ENCODE measurements at regions of chr9 and their contacts with region 1.

Region 1: DNA sequence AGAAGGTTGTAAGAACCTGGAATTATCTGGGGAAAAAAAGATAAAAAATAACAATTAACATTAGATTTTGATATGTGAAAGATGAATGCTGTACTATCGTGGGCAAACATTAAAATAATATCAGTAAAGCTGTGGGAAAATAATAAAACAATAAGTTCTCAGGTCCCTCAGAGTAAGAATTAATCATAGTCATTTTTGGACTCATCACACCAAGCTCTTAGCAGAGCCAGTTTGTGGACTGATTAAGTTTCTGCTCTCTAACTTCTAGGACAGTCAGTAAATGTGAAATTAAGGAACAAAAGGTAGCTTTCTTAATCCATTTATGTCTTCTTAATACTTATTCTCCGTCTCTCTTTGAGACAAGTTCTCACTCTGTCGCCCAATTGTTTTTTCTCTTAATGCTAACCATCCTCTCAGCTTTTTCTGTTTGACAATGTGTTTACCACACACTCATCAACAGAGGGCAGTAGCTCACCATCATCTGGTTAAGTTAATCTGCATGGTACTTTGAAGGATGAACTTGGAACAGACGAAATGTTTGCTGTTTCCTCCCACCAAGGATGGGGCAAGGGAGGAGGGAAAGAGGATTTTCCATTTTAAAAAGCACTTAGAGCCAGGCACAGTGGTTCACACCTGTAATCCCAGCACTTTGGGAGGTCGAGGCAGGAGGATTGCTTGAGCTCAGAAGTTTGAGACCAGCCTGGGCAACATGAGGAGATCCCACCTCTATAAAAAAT is 5.3 kb upstream of the ACO1 start:
- DNase-seq: peak; percentile 85
- ATAC-seq: peak; percentile 78
- H3K4me3 ChIP-seq: no peak overlapping the region
- H3K27ac ChIP-seq: no peak overlapping the region
- H3K4me1 ChIP-seq: peaks cover 4% of the 10 kb centered on the region
- H3K27me3 ChIP-seq: peaks cover 2% of the 10 kb centered on the region; the same call in 1 of the 2 replicates
- CTCF ChIP-seq: peak; percentile 95
- POLR2A ChIP-seq: 0 out of 2 replicates have a peak, but pooled peaks have one; percentile 34
- RAD21 ChIP-seq: peak; percentile 97

Region 2: GRCh38 chr9:32326146-32326545 is 53.0 kb before region 1 on chr9:
- CTCF ChIA-PET with region 1: no interaction called
- POLR2A ChIA-PET with region 1: no interaction called
- dilution Hi-C with region 1: no loop called
- in situ Hi-C with region 1: no loop called
- intact Hi-C with region 1: no loop called
- DNase-seq: no peak
- ATAC-seq: no peak
- H3K4me3 ChIP-seq: no peak overlapping the region
- H3K27ac ChIP-seq: no peak overlapping the region
- H3K4me1 ChIP-seq: no peaks in the 10 kb centered on the region
- H3K27me3 ChIP-seq: no peaks in the 10 kb centered on the region
- CTCF ChIP-seq: no peak
- POLR2A ChIP-seq: no peak
- RAD21 ChIP-seq: no peak

Region 3: GRCh38 chr9:32431940-32432555 is 52.9 kb after region 1 on chr9:
- CTCF ChIA-PET with region 1: interaction called, 18 read pairs
- POLR2A ChIA-PET with region 1: no interaction called
- dilution Hi-C with region 1: no loop called
- in situ Hi-C with region 1: no loop called
- intact Hi-C with region 1: loop called (anchors 1 kb)
- DNase-seq: peak; percentile 64
- ATAC-seq: peak; percentile 43
- H3K4me3 ChIP-seq: no peak overlapping the region
- H3K27ac ChIP-seq: peak overlapping the region; percentile 82
- H3K4me1 ChIP-seq: peaks cover 35% of the 10 kb centered on the region
- H3K27me3 ChIP-seq: no peaks in the 10 kb centered on the region
- CTCF ChIP-seq: peak; percentile 57
- POLR2A ChIP-seq: no peak
- RAD21 ChIP-seq: peak; percentile 55

Region 4: DNA sequence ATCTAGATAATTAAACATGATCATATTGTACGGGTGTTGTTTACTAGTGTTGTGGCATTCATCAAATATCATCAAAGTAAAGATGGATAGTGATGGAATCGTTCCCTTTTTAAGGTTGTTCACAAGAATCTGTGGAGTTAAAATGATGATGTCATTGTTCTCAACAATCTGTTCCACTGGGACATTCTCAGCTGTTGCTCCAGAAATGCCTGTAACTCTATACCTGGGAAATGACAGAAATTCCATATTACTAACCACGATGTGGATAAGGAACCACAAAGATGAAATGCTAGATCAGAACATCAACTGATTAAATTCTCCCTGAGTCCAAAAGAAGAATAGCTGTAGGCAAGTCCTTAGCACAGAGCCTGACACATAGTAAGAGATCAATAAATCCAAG is 108.8 kb after region 1 on chr9:
- CTCF ChIA-PET with region 1: interaction called, 11 read pairs
- POLR2A ChIA-PET with region 1: no interaction called
- dilution Hi-C with region 1: no loop called
- in situ Hi-C with region 1: no loop called
- intact Hi-C with region 1: no loop called
- DNase-seq: peak; percentile 86
- ATAC-seq: peak; percentile 25
- H3K4me3 ChIP-seq: no peak overlapping the region
- H3K27ac ChIP-seq: no peak overlapping the region
- H3K4me1 ChIP-seq: peaks cover 4% of the 10 kb centered on the region; the same call in 1 of the 2 replicates
- H3K27me3 ChIP-seq: no peaks in the 10 kb centered on the region
- CTCF ChIP-seq: no peak
- POLR2A ChIP-seq: no peak
- RAD21 ChIP-seq: no peak

Region 5: DNA sequence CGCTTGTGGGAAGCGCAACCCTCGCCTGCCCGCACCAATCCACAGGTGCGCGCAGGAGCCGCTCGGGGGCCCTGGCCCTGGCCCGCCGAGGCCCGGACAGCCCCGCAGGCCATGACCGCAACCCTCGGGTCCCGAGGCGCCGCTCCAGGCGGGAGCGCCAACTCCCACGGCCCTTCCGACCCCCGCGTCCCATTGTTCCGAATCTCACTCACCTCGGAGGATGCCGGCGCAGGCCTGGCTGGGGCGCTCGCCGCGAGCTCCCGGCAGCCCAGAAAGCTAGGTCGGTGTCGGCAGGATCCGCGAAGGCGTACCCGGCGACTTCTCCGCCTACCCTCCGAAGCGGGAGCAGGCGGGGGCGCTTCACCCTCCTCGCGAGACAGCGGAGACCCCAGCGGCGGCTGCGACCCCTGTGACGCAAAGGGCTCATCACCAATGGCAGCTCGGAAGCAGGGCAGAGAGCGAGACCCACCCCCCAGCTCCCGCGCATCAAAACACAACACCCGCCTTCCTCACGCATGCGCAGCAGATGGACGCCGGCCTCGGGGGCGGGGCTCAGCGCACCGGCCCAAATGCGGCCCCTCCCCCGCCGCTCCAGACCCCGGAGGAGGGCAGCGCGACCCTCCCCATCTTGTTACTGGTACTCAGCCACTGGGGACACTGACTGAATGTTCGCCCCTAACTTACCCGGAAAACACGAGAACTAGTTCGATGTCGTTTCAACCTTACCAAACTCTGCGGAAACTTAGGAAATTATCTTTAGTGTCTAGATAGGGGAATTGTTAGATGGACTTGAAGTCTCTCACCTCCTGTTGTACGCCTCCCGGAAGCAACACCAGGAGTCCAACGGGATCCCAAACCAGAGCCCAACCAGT is 171.6 kb after region 1 on chr9:
- CTCF ChIA-PET with region 1: interaction called, 9 read pairs
- POLR2A ChIA-PET with region 1: no interaction called
- dilution Hi-C with region 1: no loop called
- in situ Hi-C with region 1: no loop called
- intact Hi-C with region 1: loop called (anchors 2 kb)
- DNase-seq: peak; percentile 91
- ATAC-seq: peak; percentile 82
- H3K4me3 ChIP-seq: peak overlapping the region; percentile 94
- H3K27ac ChIP-seq: peak overlapping the region; percentile 46
- H3K4me1 ChIP-seq: no peaks in the 10 kb centered on the region; the same call in 1 of the 2 replicates
- H3K27me3 ChIP-seq: no peaks in the 10 kb centered on the region
- CTCF ChIP-seq: peak; percentile 18; the same call in 1 of the 2 replicates
- POLR2A ChIP-seq: peak; percentile 38; the same call in 1 of the 2 replicates
- RAD21 ChIP-seq: no peak

Region 6: GRCh38 chr9:32579706-32580331 is 200.7 kb after region 1 on chr9:
- CTCF ChIA-PET with region 1: interaction called, 189 read pairs
- POLR2A ChIA-PET with region 1: no interaction called
- dilution Hi-C with region 1: no loop called
- in situ Hi-C with region 1: loop called (anchors 5 kb)
- intact Hi-C with region 1: loop called (anchors 1 kb)
- DNase-seq: peak; percentile 53
- ATAC-seq: peak; percentile 65; the same call in 1 of the 2 replicates
- H3K4me3 ChIP-seq: no peak overlapping the region
- H3K27ac ChIP-seq: no peak overlapping the region
- H3K4me1 ChIP-seq: 0 out of 2 replicates have a peak, but pooled peaks cover 3% of the 10 kb centered on the region
- H3K27me3 ChIP-seq: peaks cover 2% of the 10 kb centered on the region; the same call in 1 of the 2 replicates
- CTCF ChIP-seq: peak; percentile 89
- POLR2A ChIP-seq: no peak
- RAD21 ChIP-seq: peak; percentile 82

Region 7: GRCh38 chr9:32703635-32704034 is 324.5 kb after region 1 on chr9:
- CTCF ChIA-PET with region 1: no interaction called
- POLR2A ChIA-PET with region 1: no interaction called
- dilution Hi-C with region 1: no loop called
- in situ Hi-C with region 1: no loop called
- intact Hi-C with region 1: loop called (anchors 5 kb)
- DNase-seq: no peak
- ATAC-seq: no peak
- H3K4me3 ChIP-seq: no peak overlapping the region
- H3K27ac ChIP-seq: no peak overlapping the region
- H3K4me1 ChIP-seq: no peaks in the 10 kb centered on the region; the same call in 1 of the 2 replicates
- H3K27me3 ChIP-seq: peaks cover 3% of the 10 kb centered on the region; the same call in 1 of the 2 replicates
- CTCF ChIP-seq: 0 out of 2 replicates have a peak, but pooled peaks have one; percentile 10
- POLR2A ChIP-seq: no peak
- RAD21 ChIP-seq: no peak